ENCODE measurements at regions of chrX and their contacts with region 1.

Region 1: DNA sequence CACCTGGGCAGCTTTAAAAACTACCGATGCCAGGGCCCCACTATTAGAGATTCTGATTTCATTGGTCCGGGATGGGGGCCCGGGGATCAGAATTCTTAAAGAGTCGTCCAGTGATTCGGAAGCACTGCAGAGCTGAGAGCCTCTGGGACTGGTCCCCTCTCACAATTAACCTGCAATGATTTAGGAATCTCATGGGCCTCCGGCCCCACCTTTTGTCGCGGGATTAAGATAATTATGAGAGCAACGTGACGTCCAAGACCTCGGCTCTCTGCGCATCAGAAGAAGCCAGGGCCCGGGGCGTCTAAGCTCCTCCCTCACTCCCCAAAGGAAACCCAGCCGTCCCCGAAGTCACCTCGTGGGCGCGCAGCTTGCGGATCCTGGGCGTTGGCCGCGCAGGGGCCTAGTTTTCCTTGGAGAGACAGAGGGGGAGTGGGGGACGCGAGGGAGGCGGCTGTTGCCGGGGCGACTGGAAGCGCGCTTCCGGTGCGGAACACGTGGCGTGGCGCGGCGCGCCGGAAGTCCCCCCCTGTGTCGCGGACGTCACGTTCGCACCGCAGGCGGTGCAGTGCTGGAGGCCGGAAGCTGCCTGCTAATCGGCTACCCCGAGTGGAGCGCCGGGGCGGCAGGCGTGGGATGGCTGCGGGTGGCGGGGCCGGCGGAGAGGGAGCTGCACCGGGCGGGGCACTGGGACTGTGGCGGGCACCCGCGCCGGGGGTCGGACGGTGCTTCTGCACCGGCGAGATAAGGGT is at the start of gene GEMIN8:
- DNase-seq: peak; percentile 67
- H3K4me3 ChIP-seq: peak within 1 kb of the TSS; percentile 64
- H3K27ac ChIP-seq: peak within 1 kb of the TSS; percentile 73
- H3K27me3 ChIP-seq: no peaks in the 10 kb centered on the region
- CTCF ChIP-seq: no peak
- polyA plus RNA-seq, gene GEMIN8: 19.7 and 22.1 TPM in 2 replicates

Region 2: DNA sequence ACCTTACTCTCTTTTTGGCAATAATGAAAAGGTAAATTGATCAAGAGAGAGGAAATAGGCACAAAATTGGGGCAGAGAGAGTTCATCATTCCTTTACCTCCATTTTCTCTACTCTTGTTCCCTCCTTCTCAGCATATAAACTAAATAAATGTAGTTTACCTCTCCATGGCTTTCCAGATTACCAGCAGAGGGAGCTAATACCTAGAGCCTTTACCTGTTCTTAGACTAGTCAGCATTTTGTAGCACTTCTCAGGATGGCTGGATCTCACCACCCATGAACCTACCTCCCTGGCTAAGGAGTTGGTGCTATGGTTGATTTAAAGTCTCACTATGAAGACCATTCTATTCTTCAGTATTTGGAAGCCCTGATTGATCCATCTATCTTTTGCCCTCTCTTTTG is 279.4 kb before region 1 on chrX:
- CTCF ChIA-PET with region 1: interaction called, 10 read pairs
- POLR2A ChIA-PET with region 1: no interaction called
- DNase-seq: no peak
- H3K4me3 ChIP-seq: no peak overlapping the region
- H3K27ac ChIP-seq: no peak overlapping the region
- H3K27me3 ChIP-seq: no peaks in the 10 kb centered on the region
- CTCF ChIP-seq: peak; percentile 47

Measured in AG04450 (cell line).